ENCODE measurements at regions of chr4 and their contacts with region 1.

Region 1: GRCh38 chr4:108030332-108030731 is 40.6 kb downstream of the HADH start:
- DNase-seq: peak; percentile 69
- H3K4me3 Mint-ChIP-seq: peak overlapping the region; percentile 43
- H3K27ac Mint-ChIP-seq: peak overlapping the region; percentile 89
- H3K4me1 Mint-ChIP-seq: peaks cover 68% of the 10 kb centered on the region
- H3K27me3 Mint-ChIP-seq: no peaks in the 10 kb centered on the region

Region 2: GRCh38 chr4:107363125-107363524 is 667.2 kb before region 1 on chr4:
- intact Hi-C with region 1: no loop called
- DNase-seq: no peak
- H3K4me3 Mint-ChIP-seq: no peak overlapping the region
- H3K27ac Mint-ChIP-seq: no peak overlapping the region
- H3K4me1 Mint-ChIP-seq: no peaks in the 10 kb centered on the region
- H3K27me3 Mint-ChIP-seq: no peaks in the 10 kb centered on the region

Region 3: GRCh38 chr4:107824353-107825071 is 205.8 kb before region 1 on chr4 and contains the start of gene SGMS2:
- intact Hi-C with region 1: no loop called
- DNase-seq: no peak
- H3K4me3 Mint-ChIP-seq: peak within 1 kb of the TSS; percentile 85
- H3K27ac Mint-ChIP-seq: peak within 1 kb of the TSS; percentile 70
- H3K4me1 Mint-ChIP-seq: peaks cover 9% of the 10 kb centered on the region
- H3K27me3 Mint-ChIP-seq: peaks cover 55% of the 10 kb centered on the region
- total RNA-seq, gene SGMS2: 0.64 and 1.1 TPM in 2 replicates

Region 4: DNA sequence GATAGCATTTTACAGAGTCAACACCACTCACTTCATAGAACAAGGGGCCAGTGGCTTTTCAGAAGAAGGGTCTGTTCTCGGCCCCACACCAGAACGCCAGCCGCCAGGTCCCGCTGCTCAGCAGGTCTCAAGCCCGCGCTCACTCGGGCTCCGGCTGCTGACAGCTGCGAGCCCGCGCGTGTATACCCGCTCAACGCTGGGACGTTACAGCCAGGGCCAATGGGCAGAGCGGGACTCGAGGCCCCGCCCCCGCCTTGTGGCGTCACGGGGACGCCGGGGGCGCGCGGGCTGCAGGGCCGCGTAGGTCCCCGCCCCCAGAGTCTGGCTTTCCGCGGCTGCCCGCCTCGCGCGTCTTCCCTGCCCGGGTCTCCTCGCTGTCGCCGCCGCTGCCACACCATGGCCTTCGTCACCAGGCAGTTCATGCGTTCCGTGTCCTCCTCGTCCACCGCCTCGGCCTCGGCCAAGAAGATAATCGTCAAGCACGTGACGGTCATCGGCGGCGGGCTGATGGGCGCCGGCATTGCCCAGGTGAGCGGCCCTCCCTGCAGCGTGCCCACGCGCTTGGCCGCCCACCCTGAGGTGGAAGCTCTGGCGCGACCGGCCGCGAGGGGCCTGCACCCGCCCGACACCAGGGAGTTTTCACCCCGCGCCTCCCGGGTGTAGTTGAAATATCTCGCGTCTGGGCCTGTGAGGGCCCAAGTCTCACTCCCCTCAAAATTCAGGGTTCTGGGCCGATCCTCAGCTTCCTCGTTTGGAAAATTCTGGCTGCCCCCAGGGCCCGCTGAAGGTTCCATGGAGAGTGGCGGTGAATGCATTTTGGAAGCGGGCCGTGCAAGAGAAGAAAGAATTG is 40.6 kb before region 1 on chr4 and contains the start of gene HADH:
- intact Hi-C with region 1: loop called (anchors 2 kb)
- DNase-seq: peak; percentile 95
- H3K4me3 Mint-ChIP-seq: peak within 1 kb of the TSS; percentile 97
- H3K27ac Mint-ChIP-seq: peak within 1 kb of the TSS; percentile 96
- H3K4me1 Mint-ChIP-seq: peaks cover 57% of the 10 kb centered on the region
- H3K27me3 Mint-ChIP-seq: no peaks in the 10 kb centered on the region
- total RNA-seq, gene HADH: 33.9 and 36.8 TPM in 2 replicates

Region 5: DNA sequence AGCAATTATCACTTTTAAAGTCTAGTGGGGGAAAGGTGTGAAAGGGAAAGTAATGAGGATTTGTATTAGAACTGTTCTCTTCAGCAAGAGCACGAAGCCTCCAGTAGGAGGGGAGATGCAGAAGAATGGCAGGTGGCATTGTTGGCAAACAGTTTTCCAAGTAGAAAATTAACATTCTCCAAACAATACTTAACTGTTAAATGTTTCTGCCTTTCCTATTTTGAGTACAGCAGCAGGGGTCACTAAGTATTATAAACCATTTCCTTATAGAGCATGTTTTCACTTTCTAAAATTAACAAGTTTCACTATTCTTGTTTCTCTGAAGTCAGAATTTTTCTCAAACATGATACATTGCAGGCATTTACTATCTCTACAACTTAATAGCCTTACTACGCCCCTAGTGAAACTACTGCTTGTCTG is 79.7 kb after region 1 on chr4:
- intact Hi-C with region 1: loop called (anchors 1 kb)
- DNase-seq: no peak
- H3K4me3 Mint-ChIP-seq: peak overlapping the region; percentile 37
- H3K27ac Mint-ChIP-seq: peak overlapping the region; percentile 67
- H3K4me1 Mint-ChIP-seq: peaks cover 95% of the 10 kb centered on the region
- H3K27me3 Mint-ChIP-seq: no peaks in the 10 kb centered on the region

Region 6: DNA sequence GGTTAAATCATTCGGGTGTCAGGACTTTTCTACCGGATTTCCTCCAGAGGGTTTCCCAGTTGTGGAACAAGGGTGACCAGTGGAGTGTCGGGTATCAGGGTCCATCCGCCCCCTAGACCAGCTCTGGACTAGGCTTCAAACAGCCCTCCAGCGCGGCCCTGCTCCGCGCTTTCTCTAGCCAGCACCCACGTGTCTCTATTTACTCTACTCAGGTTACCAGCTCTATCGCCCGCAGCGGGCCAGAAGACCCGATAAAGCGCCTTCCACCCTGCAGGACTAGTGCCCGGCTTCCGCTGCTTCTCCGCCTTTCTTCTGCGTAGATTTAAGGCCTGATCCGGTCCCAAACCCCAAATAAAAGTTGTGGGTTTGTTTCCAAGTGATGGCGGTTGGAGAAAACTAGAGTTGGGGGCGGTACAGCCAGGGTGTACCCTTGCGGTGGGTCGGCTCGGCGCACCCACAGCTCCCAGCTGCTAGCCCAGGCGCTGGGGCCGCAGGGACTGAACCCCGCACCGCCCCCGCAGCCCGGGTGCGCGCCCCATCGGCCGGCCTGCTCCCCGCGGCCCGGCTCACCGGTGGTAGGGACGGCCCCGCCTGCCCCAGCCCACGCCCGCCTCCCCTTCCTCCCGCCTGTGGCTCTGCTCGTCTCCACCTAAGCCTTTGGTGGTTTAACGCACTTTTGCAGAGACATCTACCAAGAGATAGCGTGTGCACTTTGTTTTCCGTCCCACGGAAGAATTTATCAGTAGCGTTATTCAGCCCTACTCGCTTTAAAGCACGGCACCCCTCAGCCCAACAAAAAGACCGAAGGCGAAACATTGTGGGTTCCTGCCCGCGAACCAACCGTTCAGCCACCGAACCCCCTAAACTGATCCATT is 136.3 kb after region 1 on chr4:
- intact Hi-C with region 1: loop called (anchors 1 kb)
- DNase-seq: peak; percentile 68
- H3K4me3 Mint-ChIP-seq: peak overlapping the region; percentile 98
- H3K27ac Mint-ChIP-seq: peak overlapping the region; percentile 98
- H3K4me1 Mint-ChIP-seq: peaks cover 68% of the 10 kb centered on the region
- H3K27me3 Mint-ChIP-seq: peaks cover 12% of the 10 kb centered on the region

Region 7: GRCh38 chr4:108240366-108240765 is 210.0 kb after region 1 on chr4:
- intact Hi-C with region 1: no loop called
- DNase-seq: no peak
- H3K4me3 Mint-ChIP-seq: no peak overlapping the region
- H3K27ac Mint-ChIP-seq: no peak overlapping the region
- H3K4me1 Mint-ChIP-seq: no peaks in the 10 kb centered on the region
- H3K27me3 Mint-ChIP-seq: no peaks in the 10 kb centered on the region

Region 8: GRCh38 chr4:108433832-108434231 is 403.5 kb after region 1 on chr4:
- intact Hi-C with region 1: loop called (anchors 2 kb)
- DNase-seq: peak; percentile 47
- H3K4me3 Mint-ChIP-seq: peak overlapping the region; percentile 28
- H3K27ac Mint-ChIP-seq: peak overlapping the region; percentile 80
- H3K4me1 Mint-ChIP-seq: peaks cover 39% of the 10 kb centered on the region
- H3K27me3 Mint-ChIP-seq: no peaks in the 10 kb centered on the region

Region 9: GRCh38 chr4:108620101-108620932 is 590.0 kb after region 1 on chr4 and contains the start of gene RPL34:
- intact Hi-C with region 1: loop called (anchors 1 kb)
- DNase-seq: peak; percentile 96
- H3K4me3 Mint-ChIP-seq: peak within 1 kb of the TSS; percentile 98
- H3K27ac Mint-ChIP-seq: peak within 1 kb of the TSS; percentile 97
- H3K4me1 Mint-ChIP-seq: peaks cover 43% of the 10 kb centered on the region
- H3K27me3 Mint-ChIP-seq: no peaks in the 10 kb centered on the region
- total RNA-seq, gene RPL34: 1,258 and 1,304 TPM in 2 replicates

Measured in activated T-helper 1 cell treated with anti-CD3 and anti-CD28 coated beads, Interleukin-12 subunit alpha, Interleukin-12 subunit beta, Interleukin-2, Interleukin-4 antibody, amounts not matched to agents 30 ng/mL and 10 ng/mL and 1 ng/mL, durations not matched to agents 14 hours and 24 hours and 36 hours (primary cell).